ENCODE measurements at regions of chr3 and their contacts with region 1.

Region 1: DNA sequence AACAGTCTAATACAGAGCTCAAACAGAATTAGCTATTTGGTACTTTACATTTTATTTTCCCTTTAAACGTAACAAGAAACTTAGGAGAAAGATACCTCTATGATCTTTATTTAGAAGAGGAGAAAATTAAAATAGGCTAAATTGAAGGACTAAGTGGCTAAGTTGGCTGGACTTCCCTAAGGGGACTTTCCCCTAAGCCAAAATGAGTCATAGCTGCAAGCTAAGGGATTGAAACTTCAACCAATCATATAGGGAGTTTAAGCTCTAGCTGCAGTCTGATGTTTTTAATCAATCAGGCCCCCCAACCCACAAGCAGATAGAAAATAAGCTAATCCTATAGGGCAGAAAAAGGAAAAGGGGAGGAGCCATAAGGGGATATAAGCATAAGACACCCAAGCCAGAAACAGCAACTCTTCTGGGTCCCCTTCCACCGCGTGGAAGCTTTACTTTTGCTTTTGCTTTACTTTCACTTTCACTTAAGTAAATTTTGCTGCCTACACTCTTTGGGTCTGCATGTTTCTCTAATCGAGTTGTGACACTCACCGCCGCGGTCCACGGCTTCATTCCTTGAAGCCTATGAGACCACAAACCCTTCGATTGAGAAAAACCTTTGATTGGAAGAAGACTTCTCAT is 1108.5 kb upstream of the EPHA6 start:
- DNase-seq: no peak
- ATAC-seq: no peak
- H3K4me3 ChIP-seq: no peak overlapping the region
- H3K27ac ChIP-seq: no peak overlapping the region
- H3K4me1 ChIP-seq: no peaks in the 10 kb centered on the region
- H3K27me3 ChIP-seq: no peaks in the 10 kb centered on the region
- CTCF ChIP-seq: no peak
- POLR2A ChIP-seq: no peak
- RAD21 ChIP-seq: no peak

Region 2: DNA sequence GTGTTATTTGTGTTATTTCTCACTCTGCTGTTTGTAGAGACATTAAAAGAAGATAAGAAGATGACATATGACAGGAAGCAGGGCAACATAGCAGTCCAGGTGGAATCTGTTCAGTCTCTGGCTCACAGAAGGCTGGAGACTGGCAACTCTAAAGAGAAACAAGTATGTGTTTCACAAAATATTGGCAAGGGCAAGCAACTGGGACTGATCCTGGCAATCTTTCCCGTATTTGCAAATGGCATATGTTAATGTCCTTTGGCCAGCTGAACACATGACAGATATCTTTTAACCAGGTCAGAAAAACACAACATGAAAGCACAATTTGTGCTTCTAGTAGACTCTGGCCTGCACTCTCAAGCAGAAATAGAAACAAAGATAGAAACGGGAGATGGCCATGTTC is 245.6 kb before region 1 on chr3:
- CTCF ChIA-PET with region 1: no interaction called
- POLR2A ChIA-PET with region 1: no interaction called
- RAD21 ChIA-PET with region 1: no interaction called
- intact Hi-C with region 1: no loop called
- DNase-seq: no peak
- ATAC-seq: no peak
- H3K4me3 ChIP-seq: no peak overlapping the region
- H3K27ac ChIP-seq: no peak overlapping the region
- H3K4me1 ChIP-seq: no peaks in the 10 kb centered on the region
- H3K27me3 ChIP-seq: no peaks in the 10 kb centered on the region
- CTCF ChIP-seq: no peak
- POLR2A ChIP-seq: no peak
- RAD21 ChIP-seq: no peak

Region 3: DNA sequence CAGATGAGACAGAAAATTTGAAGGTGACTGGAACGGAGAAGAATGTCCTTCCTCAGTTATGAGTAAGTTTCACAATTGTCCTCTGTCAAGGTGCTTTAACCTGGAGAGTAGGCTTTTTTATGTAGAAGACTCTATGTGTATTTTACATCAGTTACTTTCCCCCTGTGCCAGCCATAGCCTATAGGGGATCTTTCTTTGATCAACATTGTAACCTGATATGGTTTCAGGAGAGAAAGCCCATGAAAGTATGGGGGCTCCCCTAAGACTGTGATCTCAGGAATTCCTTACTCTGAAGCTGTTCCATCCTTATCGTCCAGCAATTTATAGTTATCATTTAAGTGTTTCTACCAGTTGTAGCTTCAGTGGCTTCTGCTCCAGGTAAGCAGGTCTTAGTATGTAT is 32.1 kb after region 1 on chr3:
- CTCF ChIA-PET with region 1: no interaction called
- POLR2A ChIA-PET with region 1: no interaction called
- RAD21 ChIA-PET with region 1: no interaction called
- intact Hi-C with region 1: loop called (anchors 1 kb)
- DNase-seq: no peak
- ATAC-seq: no peak
- H3K4me3 ChIP-seq: no peak overlapping the region
- H3K27ac ChIP-seq: no peak overlapping the region
- H3K4me1 ChIP-seq: no peaks in the 10 kb centered on the region
- H3K27me3 ChIP-seq: no peaks in the 10 kb centered on the region
- CTCF ChIP-seq: no peak
- POLR2A ChIP-seq: no peak
- RAD21 ChIP-seq: no peak

Region 4: DNA sequence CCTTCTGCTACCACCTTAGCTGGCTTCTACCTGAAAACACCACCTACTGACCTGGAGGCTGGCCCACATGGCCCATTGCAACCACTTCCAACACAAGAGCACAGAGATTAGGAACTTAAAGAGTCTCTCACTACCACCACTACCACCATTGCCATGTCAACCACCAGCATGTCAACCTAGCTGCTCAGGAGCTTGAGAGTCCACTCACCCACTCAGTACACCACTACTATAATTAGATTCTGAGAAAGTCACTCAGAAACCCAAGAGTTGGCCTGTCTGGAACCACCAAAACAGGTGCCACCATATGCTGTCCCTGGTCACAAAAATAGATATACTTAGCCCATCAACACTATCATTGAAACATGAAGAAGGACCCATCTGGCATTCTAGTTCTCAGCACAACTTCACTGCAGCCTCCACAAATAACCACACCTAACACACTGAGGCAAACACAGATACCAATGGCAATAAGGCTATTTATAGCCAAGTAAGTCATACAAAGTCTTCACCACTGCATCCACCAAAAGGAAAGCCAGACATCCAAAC is 301.8 kb after region 1 on chr3:
- CTCF ChIA-PET with region 1: no interaction called
- POLR2A ChIA-PET with region 1: no interaction called
- RAD21 ChIA-PET with region 1: no interaction called
- intact Hi-C with region 1: no loop called
- DNase-seq: no peak
- ATAC-seq: no peak
- H3K4me3 ChIP-seq: no peak overlapping the region
- H3K27ac ChIP-seq: no peak overlapping the region
- H3K4me1 ChIP-seq: no peaks in the 10 kb centered on the region
- H3K27me3 ChIP-seq: no peaks in the 10 kb centered on the region
- CTCF ChIP-seq: no peak
- POLR2A ChIP-seq: no peak
- RAD21 ChIP-seq: no peak

Measured in HCT116 (cell line).